ENCODE measurements at regions of chr15 and their contacts with region 1.

Region 1: GRCh38 chr15:67678993-67679392 is 136.5 kb downstream of the MAP2K5 start:
- DNase-seq: no peak

Region 2: DNA sequence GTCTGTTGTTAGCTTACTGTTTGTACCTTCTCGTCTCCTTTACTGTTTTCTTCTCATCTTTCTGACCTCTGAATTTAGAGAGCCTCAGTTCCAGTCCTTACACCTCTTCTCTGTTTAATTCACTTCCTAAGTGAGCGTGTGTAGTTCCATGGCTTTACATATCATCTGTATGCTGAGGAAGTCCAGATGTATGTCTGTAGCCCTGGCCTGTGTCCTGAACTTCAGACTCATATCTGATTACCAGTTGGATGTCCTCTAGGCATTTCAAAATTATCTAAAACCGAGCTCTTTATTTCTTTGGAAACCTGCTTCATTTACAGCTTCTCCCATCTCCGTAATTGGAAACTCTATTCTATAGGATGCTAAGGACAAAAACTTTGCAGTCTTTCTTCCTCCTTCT is 60.7 kb before region 1 on chr15:
- intact Hi-C with region 1: no loop called
- DNase-seq: no peak

Region 3: GRCh38 chr15:67652586-67652985 is 26.4 kb before region 1 on chr15:
- intact Hi-C with region 1: loop called in 1 of 2 experiments (anchors 2 kb)
- DNase-seq: no peak

Region 4: DNA sequence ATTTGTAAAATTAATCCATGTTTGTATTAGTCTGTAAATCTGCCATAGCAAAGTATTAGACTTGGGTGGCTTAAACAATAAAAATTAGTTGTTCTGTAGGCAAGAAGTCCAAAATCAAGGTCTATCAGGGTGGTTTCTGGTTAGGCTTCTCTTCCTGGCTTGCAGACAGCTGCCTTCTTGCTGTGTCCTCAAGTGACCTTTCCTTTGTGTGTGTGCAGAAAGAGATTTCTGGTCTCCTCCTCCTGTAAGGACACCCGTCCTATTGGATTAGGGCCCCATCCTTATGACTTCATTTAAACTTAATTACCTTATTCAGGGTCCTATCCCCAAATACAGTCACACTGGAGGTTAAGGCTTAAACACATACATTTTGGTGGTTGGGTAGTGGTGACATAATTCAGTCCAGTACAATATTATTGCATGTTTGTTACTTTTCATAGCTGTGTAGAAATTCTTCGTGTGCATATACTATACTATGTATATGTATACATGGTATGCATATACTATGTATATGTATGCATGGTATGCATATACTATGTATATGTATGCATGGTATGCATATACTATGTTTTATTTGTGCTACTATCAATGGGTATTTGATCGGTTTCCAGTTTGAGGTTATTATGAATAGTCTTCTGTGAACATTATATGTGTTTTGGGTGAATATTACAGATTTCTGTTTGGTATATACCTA is 218.8 kb after region 1 on chr15:
- intact Hi-C with region 1: no loop called
- DNase-seq: no peak

Region 5: DNA sequence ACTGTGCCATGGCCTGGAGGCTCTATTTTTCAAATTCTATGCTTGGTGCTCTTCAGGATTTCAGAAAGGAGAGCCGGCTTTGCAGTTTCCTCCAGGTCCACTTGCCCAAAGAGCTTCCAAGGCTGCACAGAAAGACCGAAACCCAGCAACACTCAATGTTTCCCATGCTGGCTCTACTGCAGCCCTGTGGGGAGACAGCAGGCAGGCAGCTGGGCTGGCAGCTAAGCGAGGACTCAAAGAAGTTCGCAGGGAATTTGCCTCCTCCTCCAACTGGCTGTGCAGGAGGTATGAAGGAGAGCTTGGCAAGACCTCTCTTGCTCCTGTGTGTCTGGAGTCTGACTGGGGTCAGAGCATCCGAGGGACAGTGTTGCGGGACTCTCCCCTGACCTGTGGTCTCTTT is 770.4 kb after region 1 on chr15:
- intact Hi-C with region 1: no loop called
- DNase-seq: no peak